Mammary epithelial cell (primary cell): ENCODE measurements at regions of chr11 and their contacts with region 1.

Region 1: DNA sequence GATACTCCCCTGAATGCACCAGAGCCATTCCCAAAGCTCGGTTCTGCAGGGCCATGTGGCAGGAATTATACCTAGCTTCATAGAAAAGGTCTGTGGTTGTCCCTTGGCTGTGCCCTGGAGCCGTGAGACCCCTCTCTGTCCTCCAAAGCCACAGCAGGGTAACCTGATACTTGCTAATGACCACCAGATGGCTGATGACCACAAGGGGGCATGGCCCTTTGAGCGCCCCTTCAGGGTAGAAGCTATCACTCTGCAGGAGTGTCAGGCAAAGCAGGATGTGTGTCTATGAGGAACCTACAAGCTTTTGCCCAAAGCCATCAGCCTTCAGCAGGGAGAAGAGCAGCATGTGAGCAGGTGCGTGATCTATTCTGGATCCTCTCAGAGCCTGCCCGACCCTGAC is 95.3 kb downstream of the NTM start:
- DNase-seq: no peak
- H3K4me3 ChIP-seq: no peak overlapping the region
- H3K27ac ChIP-seq: no peak overlapping the region
- H3K4me1 ChIP-seq: no peaks in the 10 kb centered on the region
- H3K27me3 ChIP-seq: no peaks in the 10 kb centered on the region
- CTCF ChIP-seq: no peak

Region 2: DNA sequence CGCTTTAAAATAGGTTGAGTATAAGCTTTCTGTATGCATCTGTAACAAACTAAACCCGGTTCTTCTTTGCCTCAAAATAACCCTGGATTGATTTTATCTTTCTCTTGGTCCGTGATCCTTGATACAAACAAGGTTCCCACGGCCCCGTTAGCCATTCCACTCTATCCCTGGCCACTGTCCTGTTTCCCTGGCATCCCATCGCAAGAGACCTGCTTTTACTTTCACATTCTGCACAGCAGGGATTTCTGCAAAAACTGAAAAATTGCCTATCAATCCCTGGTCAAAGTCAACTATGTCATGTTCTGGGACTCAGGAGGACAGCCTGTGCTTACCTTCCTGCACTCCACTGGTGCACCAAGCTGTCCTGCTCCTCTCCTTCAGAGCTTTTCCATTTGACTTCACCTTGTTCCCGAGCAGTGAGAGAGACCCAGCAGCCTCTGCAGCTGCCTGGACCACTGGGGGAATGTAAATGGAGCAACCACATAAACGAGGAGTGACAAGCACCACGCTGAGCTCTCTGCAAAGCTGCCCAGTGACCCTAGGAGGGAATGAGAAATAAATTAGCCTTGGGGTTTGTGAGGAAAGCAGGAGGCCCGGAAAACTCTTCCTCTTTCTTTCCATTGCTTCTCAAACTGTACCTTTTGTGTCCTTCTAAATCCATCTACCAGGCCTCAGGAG is 80.6 kb after region 1 on chr11:
- CTCF ChIA-PET with region 1: no interaction called
- dilution Hi-C with region 1: loop called (anchors 5 kb)
- in situ Hi-C with region 1: no loop called
- intact Hi-C with region 1: no loop called
- DNase-seq: no peak
- H3K4me3 ChIP-seq: no peak overlapping the region
- H3K27ac ChIP-seq: no peak overlapping the region
- H3K4me1 ChIP-seq: no peaks in the 10 kb centered on the region
- H3K27me3 ChIP-seq: no peaks in the 10 kb centered on the region
- CTCF ChIP-seq: no peak

Region 3: GRCh38 chr11:131572423-131572822 is 106.7 kb after region 1 on chr11:
- CTCF ChIA-PET with region 1: no interaction called
- dilution Hi-C with region 1: no loop called
- in situ Hi-C with region 1: no loop called
- intact Hi-C with region 1: no loop called
- DNase-seq: no peak
- H3K4me3 ChIP-seq: no peak overlapping the region
- H3K27ac ChIP-seq: no peak overlapping the region
- H3K4me1 ChIP-seq: no peaks in the 10 kb centered on the region
- H3K27me3 ChIP-seq: no peaks in the 10 kb centered on the region
- CTCF ChIP-seq: no peak

Region 4: GRCh38 chr11:131748151-131749050 is 282.7 kb after region 1 on chr11:
- CTCF ChIA-PET with region 1: no interaction called
- dilution Hi-C with region 1: no loop called
- in situ Hi-C with region 1: no loop called
- intact Hi-C with region 1: no loop called
- DNase-seq: peak; percentile 42
- H3K4me3 ChIP-seq: no peak overlapping the region
- H3K27ac ChIP-seq: no peak overlapping the region
- H3K4me1 ChIP-seq: peaks cover 6% of the 10 kb centered on the region
- H3K27me3 ChIP-seq: no peaks in the 10 kb centered on the region
- CTCF ChIP-seq: peak; percentile 85 to 92